Psoas muscle (tissue), 8 donors: ENCODE measurements at regions of chr1 and their contacts with region 1.

Region 1: GRCh38 chr1:66996018-66996682 is 57.8 kb downstream of the SLC35D1 start:
- DNase-seq: no peak
- ATAC-seq: peak; percentile 57 to 75 (median 68)
- H3K4me3 ChIP-seq: no peak overlapping the region
- H3K27ac ChIP-seq: no peak overlapping the region
- H3K4me1 ChIP-seq: no peaks in the 10 kb centered on the region
- H3K27me3 ChIP-seq: no peaks in the 10 kb centered on the region
- CTCF ChIP-seq: peak; percentile 71

Region 2: DNA sequence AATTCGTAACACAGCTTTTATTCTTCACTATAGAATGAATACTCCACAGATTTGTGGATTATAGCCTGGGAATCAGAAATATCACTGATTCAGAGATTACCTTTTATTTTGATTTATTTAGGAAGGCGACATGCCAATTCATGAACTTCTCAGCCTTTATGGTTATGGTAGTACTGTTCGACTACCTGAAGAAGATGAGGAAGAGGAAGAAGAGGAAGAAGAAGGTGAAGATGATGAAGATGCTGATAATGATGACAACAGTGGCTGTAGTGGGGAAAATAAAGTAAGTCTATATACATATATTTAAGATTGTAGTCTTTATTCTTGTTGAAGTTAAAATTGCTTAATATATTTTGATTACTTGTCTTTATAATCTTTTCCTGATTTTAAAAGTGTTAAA is 38.2 kb before region 1 on chr1:
- intact Hi-C with region 1: loop called in 1 of 2 experiments (anchors 5 kb)
- DNase-seq: no peak
- ATAC-seq: no peak
- H3K4me3 ChIP-seq: no peak overlapping the region
- H3K27ac ChIP-seq: no peak overlapping the region
- H3K4me1 ChIP-seq: no peaks in the 10 kb centered on the region
- H3K27me3 ChIP-seq: no peaks in the 10 kb centered on the region
- CTCF ChIP-seq: no peak

Region 3: GRCh38 chr1:67053785-67054772 is 57.9 kb after region 1 on chr1 and contains the start of gene SLC35D1:
- intact Hi-C with region 1: loop called in 1 of 2 experiments (anchors 5 kb)
- DNase-seq: peak; percentile 82 to 88
- ATAC-seq: peak; percentile 75 to 87 (median 86)
- H3K4me3 ChIP-seq: peak within 1 kb of the TSS; percentile 96
- H3K27ac ChIP-seq: peak within 1 kb of the TSS; percentile 98
- H3K4me1 ChIP-seq: peaks cover 23% of the 10 kb centered on the region
- H3K27me3 ChIP-seq: no peaks in the 10 kb centered on the region
- CTCF ChIP-seq: no peak
- total RNA-seq, gene SLC35D1: 5.1 to 6.8 (median 6.3) TPM

Region 4: DNA sequence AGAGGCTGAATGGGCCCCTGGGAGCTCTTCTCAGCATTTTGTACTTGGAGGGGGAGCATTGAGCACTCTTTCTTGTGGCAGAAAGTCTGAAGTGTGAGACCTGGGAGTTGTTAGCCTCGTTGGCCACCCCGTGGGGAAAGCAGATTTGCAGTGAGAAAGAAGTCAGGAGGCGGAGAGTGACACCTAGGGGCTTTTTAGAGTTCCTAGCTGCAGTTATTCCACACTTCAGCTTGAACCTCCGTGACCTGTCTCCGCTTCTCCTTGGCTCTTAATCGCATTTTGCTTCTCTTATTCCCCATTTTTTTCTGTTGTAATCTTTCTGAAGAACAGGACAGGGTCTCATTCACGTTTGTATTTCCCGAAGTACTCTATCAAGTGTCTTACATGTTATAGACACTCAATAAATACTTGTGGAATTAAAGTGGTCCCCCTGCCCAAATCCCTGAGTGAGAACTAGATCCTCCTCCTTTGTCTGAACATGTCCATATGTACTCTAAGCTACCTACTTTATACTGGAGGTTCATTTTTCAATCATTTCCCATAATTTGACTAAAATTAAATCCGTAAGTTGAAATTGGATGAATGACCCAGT is 153.1 kb after region 1 on chr1:
- intact Hi-C with region 1: loop called (anchors 1 to 2 kb)
- DNase-seq: peak; percentile 47 to 64
- ATAC-seq: peak; percentile 88 to 100 (median 96)
- H3K4me3 ChIP-seq: no peak overlapping the region
- H3K27ac ChIP-seq: no peak overlapping the region
- H3K4me1 ChIP-seq: no peaks in the 10 kb centered on the region
- H3K27me3 ChIP-seq: no peaks in the 10 kb centered on the region
- CTCF ChIP-seq: peak; percentile 82